ENCODE measurements at regions of chr3 and their contacts with region 1.

Region 1: GRCh38 chr3:46276502-46277099 is 34.3 kb downstream of the CCR3 start:
- DNase-seq: peak in 1 of 2 donors; percentile 22
- ATAC-seq: no peak
- H3K4me3 ChIP-seq: no peak overlapping the region
- H3K27ac ChIP-seq: no peak overlapping the region
- H3K4me1 ChIP-seq: no peaks in the 10 kb centered on the region
- H3K27me3 ChIP-seq: no peaks in the 10 kb centered on the region
- CTCF ChIP-seq: peak in 2 of 5 experiments; percentile 26 to 36
- POLR2A ChIP-seq: no peak

Region 2: GRCh38 chr3:46378426-46378942 is 101.9 kb after region 1 on chr3:
- in situ Hi-C with region 1: loop called in 1 of 4 experiments (anchors 10 kb)
- intact Hi-C with region 1: no loop called
- DNase-seq: peak; percentile 43 to 50
- ATAC-seq: peak in 1 of 2 donors; percentile 37
- H3K4me3 ChIP-seq: no peak overlapping the region
- H3K27ac ChIP-seq: no peak overlapping the region
- H3K4me1 ChIP-seq: peaks cover 17 to 19% of the 10 kb centered on the region in 2 donors
- H3K27me3 ChIP-seq: no peaks in the 10 kb centered on the region
- CTCF ChIP-seq: peak; percentile 9 to 54 (median 46)
- POLR2A ChIP-seq: no peak

Region 3: GRCh38 chr3:46422617-46423016 is 146.0 kb after region 1 on chr3:
- in situ Hi-C with region 1: no loop called
- intact Hi-C with region 1: loop called (anchors 10 kb)
- DNase-seq: no peak
- ATAC-seq: no peak
- H3K4me3 ChIP-seq: no peak overlapping the region
- H3K27ac ChIP-seq: no peak overlapping the region
- H3K4me1 ChIP-seq: no peaks in the 10 kb centered on the region
- H3K27me3 ChIP-seq: no peaks in the 10 kb centered on the region
- CTCF ChIP-seq: no peak
- POLR2A ChIP-seq: no peak

Region 4: DNA sequence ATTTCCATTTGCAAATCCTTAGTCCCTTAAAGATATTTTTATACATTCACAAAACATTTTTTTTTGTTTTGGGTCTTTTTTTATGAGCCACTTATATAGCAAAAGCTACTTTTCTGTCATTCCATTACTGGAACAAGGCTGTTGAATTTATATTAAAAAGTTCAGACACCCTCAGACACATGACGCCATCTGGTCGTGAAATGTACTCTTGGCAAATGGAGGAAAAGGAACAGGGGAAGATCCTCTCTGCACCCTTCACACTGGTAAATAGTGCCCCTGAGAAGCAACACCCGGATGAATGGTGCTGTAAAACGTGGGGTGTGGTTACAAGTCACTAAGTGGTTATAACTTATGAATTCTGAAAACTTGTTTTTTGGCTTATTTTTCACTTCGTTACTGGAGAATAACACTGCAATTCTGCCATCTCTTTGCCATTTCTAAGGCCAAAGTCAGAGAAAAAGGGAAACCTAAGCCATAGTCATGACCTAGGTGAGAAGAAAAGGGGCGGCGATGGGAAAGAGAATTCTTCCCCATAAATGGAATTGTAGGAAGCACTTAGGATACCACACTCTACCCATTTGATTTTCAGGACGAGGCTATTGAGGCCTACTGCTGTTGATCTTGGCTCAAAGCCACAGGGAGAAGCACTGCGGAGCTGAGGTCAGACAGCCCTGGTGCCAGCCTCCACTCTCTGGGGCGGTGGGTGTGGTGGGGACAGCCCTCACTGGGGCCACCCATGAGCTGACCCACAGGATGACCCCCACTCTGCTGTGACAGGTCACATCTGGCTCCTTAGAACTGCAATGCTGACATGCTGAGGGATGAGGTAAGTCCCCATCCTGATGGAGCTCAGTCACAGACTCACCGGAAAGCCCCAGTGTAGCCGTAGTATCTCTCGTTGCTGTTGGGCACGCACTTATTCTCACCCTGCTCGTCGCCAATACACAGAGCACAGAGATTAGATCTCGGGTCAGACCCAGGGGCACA is 166.3 kb after region 1 on chr3:
- in situ Hi-C with region 1: no loop called
- intact Hi-C with region 1: loop called (anchors 5 kb)
- DNase-seq: peak in 1 of 2 donors; percentile 28
- ATAC-seq: peak in 1 of 2 donors; percentile 82
- H3K4me3 ChIP-seq: no peak overlapping the region
- H3K27ac ChIP-seq: no peak overlapping the region
- H3K4me1 ChIP-seq: no peaks in the 10 kb centered on the region
- H3K27me3 ChIP-seq: no peaks in the 10 kb centered on the region
- CTCF ChIP-seq: peak in 4 of 5 experiments; percentile 33 to 67 (median 62)
- POLR2A ChIP-seq: no peak

Measured in gastrocnemius medialis (tissue), 4 donors.